PC-3 (cell line): ENCODE measurements at regions of chr1 and their contacts with region 1.

Region 1: DNA sequence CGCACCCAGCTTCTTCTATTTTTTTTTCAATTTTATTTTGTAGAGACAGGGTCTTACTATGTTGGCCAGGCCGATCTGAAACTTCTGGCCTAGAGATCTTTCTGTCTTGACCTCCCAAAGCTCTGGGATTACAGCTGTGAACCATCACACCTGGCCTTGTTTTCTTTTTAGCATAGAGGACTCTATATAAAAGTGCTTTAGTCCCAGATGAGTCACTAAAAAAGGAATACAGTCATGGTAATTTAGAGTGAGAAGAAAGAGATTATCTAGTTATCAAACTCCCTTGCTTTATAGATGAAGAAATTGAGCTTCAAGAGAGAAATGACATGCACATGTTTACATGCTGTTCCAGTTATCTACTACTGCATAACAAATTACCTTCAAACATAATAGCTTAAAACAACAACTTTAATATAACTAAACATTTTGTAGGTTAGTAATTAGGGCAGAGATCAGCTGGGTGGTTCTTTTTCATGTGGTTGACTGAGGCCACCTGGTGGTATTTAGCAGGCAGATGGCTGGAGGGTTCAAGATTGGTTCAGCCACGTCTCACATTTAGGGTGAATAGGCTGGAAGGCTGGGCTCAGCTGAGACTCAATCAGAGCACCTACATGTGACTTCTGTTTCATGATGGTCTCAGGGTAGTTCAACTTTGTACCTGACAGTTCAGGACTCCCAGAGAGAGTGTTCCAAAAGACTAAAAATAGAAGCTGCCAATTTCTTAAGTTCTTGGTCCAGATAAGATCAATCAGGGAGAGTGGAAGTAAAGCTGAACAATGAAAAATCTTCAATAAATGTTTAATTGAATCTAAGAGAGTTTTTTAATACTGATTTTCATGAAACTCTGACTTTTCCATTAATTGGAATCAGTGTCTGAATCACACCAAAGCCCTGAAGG is 16.9 kb upstream of the MTF2 start:
- DNase-seq: peak; percentile 67
- ATAC-seq: peak; percentile 97
- H3K4me3 ChIP-seq: no peak overlapping the region
- H3K27ac ChIP-seq: no peak overlapping the region
- H3K4me1 ChIP-seq: peaks cover 5% of the 10 kb centered on the region; the same call in 1 of the 2 replicates
- H3K27me3 ChIP-seq: no peaks in the 10 kb centered on the region
- CTCF ChIP-seq: peak; percentile 90

Region 2: GRCh38 chr1:92804721-92805169 is 257.4 kb before region 1 on chr1:
- CTCF ChIA-PET with region 1: no interaction called
- POLR2A ChIA-PET with region 1: no interaction called
- intact Hi-C with region 1: no loop called
- DNase-seq: peak; percentile 67
- ATAC-seq: peak; percentile 79
- H3K4me3 ChIP-seq: no peak overlapping the region
- H3K27ac ChIP-seq: no peak overlapping the region
- H3K4me1 ChIP-seq: peaks cover 14% of the 10 kb centered on the region
- H3K27me3 ChIP-seq: no peaks in the 10 kb centered on the region
- CTCF ChIP-seq: no peak

Region 3: GRCh38 chr1:92858564-92859399 is 203.4 kb before region 1 on chr1:
- CTCF ChIA-PET with region 1: interaction called, 16 read pairs
- POLR2A ChIA-PET with region 1: no interaction called
- intact Hi-C with region 1: loop called (anchors 1 kb)
- DNase-seq: peak; percentile 91
- ATAC-seq: peak; percentile 80
- H3K4me3 ChIP-seq: peak overlapping the region; percentile 54
- H3K27ac ChIP-seq: no peak overlapping the region
- H3K4me1 ChIP-seq: peaks cover 6% of the 10 kb centered on the region; the same call in 1 of the 2 replicates
- H3K27me3 ChIP-seq: no peaks in the 10 kb centered on the region
- CTCF ChIP-seq: peak; percentile 99

Region 4: DNA sequence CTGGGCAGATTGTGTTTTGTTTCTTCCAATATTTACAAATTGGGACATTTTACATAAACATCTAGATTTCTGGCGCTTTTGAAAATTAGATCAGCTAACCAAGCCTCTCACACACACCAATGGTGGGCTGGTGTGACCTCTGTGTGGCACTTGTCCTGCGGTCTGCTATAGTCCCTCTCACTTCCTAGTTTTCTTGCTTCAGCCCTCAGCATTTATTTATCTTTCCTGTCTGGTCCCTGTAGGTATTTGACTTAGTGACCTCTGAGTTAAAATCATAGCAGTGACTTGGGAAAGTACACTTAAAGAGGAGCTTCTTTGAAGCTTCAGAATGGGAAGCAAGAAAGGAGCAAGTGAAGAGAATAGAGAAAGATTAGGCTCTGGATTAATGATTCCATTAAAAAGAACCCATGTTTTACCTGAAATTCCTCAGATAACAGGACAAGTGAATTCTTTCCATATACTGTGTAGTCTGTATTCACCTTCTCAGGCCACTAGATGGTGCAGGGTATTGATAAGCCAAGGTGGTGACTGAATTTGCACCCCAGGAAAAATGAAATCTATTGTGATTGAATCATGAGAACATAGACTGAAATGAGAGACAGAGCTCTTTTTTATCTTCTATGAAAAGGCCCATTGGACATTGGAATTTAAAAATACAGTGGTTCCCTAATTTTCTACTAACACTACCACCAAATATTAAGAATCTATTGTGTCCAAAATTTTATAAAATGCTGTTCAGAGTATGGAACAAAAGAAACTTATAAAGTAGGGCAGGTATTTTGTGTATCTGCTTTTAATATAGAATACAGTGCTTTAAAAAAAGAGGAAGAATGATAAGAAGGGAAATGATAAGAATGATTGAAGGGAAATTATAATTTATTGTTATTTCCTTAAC is 93.8 kb before region 1 on chr1:
- CTCF ChIA-PET with region 1: no interaction called
- POLR2A ChIA-PET with region 1: no interaction called
- intact Hi-C with region 1: loop called (anchors 1 kb)
- DNase-seq: peak; percentile 59
- ATAC-seq: peak; percentile 68
- H3K4me3 ChIP-seq: no peak overlapping the region
- H3K27ac ChIP-seq: no peak overlapping the region
- H3K4me1 ChIP-seq: no peaks in the 10 kb centered on the region
- H3K27me3 ChIP-seq: no peaks in the 10 kb centered on the region
- CTCF ChIP-seq: peak; percentile 81

Region 5: DNA sequence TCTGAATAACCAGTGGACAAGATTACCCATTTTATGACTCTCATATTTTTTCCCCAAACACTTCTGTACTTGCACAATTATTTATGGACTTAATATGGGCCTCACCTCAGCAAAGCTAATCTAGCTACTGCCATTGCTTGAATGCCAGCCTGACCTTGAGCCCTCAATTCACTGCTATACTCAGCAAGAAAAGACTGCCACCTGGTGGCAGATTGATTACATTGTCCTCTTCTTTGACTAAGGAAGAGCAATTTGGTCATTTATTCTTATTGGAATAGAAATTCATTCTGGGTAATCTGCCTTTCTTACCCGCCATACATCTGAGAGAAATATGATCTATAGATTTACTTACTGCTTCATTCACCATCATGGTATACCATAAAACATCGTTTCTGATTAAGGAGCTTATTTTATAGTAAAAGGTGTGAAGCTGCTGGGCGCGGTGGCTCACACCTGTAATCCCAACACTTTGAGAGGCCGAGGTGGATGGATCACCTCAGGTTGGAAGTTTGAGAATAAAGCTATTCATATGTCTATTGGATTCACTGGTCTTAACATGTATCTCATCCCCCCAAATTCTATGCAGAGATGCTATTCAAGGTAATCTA is 67.9 kb before region 1 on chr1:
- CTCF ChIA-PET with region 1: no interaction called
- POLR2A ChIA-PET with region 1: no interaction called
- intact Hi-C with region 1: loop called (anchors 1 kb)
- DNase-seq: peak; percentile 88
- ATAC-seq: peak; percentile 65
- H3K4me3 ChIP-seq: no peak overlapping the region
- H3K27ac ChIP-seq: no peak overlapping the region
- H3K4me1 ChIP-seq: peaks cover 26% of the 10 kb centered on the region
- H3K27me3 ChIP-seq: no peaks in the 10 kb centered on the region
- CTCF ChIP-seq: peak; percentile 91

Region 6: DNA sequence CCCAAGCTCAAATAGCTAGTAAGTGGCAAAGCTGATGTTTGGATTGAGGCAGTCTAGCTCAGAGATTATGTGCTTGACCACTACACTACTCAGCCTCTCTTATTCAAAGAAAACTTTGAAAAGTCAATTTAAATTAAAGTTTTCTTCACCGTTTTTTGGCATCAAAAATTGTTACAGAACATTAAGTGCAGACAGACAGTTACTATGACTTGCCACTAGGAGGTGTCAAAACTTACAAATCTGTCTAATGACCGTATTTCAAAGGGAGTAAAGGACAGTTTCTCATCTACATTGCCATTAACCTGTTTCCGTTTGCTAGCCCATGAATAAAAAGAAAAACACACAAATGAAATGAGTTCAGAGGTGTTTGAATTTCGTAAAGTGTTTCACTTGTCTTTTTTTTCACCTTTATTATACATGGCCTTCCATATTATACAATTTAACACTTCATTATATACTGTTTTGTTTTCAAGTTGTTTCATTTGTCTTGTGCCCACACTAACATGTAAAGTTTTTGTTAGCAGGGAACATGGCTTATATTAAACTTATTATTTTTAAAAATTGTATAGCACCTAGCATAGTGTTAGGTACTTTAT is 40.5 kb before region 1 on chr1:
- CTCF ChIA-PET with region 1: interaction called, 7 read pairs
- POLR2A ChIA-PET with region 1: no interaction called
- intact Hi-C with region 1: loop called (anchors 1 kb)
- DNase-seq: peak; percentile 69
- ATAC-seq: peak; percentile 56; the same call in 1 of the 2 replicates
- H3K4me3 ChIP-seq: no peak overlapping the region
- H3K27ac ChIP-seq: no peak overlapping the region
- H3K4me1 ChIP-seq: peaks cover 18% of the 10 kb centered on the region
- H3K27me3 ChIP-seq: no peaks in the 10 kb centered on the region
- CTCF ChIP-seq: peak; percentile 89

Region 7: DNA sequence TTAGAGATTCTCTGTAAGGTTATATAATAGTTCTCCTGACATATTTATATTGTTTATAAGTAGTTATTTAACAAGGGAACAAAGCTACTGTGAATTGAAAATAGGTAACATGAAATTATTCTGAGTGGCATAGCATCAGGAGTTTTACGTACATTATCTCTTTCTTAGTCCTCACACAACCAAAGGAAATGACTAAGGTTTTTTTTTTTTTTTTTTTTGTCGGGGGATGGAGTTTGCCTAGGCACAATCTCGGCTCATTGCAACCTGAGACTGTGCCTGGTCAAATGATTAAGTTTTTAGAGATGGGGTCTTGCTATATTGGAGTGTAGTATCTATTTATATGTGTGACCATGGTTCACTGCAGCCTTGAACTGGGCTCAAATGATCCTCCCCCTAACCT is 93.2 kb after region 1 on chr1:
- CTCF ChIA-PET with region 1: no interaction called
- POLR2A ChIA-PET with region 1: no interaction called
- intact Hi-C with region 1: no loop called
- DNase-seq: peak; percentile 12
- ATAC-seq: no peak; the same call in 1 of the 2 replicates
- H3K4me3 ChIP-seq: no peak overlapping the region
- H3K27ac ChIP-seq: no peak overlapping the region
- H3K4me1 ChIP-seq: no peaks in the 10 kb centered on the region
- H3K27me3 ChIP-seq: no peaks in the 10 kb centered on the region
- CTCF ChIP-seq: no peak